Endothelial cell of umbilical vein (primary cell): ENCODE measurements at regions of chr12 and their contacts with region 1.

Region 1: DNA sequence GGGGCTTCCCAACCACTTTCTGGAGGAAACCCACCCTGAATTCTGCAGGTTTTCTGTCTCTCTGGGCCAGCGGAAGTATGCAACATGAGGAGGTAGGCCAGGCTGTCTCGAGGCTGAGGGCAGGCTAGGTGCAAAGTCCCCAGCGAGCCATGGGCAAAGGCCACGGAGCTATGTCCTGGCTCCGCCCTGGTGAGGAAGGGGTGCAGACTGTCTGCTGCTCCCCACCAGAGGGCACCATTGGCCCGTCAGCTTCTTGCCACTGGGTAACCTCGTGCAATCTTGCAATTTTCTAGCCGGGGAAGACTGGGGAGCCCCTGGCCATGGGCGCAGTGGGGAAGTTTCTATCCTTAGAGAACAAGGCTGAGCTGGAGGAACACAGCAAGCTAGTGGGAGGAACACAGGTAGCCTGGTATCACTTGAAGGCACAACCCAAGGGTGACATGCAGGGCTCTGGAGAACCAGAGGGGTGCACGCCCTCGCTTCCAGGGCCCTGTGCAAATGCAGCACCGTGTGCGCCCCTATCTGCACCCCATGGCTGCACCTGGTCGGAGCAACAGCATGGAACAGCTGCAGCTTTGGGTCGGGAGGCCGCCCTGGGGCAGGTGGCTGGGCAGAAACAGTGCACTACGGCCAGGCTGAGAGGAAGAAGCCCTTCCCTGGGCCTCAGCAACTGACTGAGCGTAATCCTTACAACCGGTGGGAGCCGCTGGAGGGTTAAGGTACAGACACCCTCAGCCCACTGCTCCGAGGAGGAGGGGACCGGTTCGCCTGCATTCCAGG is 27.6 kb upstream of the RPLP0 start:
- DNase-seq: peak; percentile 80
- H3K4me3 ChIP-seq: no peak overlapping the region
- H3K27ac ChIP-seq: peak overlapping the region; percentile 100
- H3K4me1 ChIP-seq: peaks cover 72% of the 10 kb centered on the region
- H3K27me3 ChIP-seq: no peaks in the 10 kb centered on the region
- CTCF ChIP-seq: peak; percentile 90 to 94
- POLR2A ChIP-seq: no peak

Region 2: DNA sequence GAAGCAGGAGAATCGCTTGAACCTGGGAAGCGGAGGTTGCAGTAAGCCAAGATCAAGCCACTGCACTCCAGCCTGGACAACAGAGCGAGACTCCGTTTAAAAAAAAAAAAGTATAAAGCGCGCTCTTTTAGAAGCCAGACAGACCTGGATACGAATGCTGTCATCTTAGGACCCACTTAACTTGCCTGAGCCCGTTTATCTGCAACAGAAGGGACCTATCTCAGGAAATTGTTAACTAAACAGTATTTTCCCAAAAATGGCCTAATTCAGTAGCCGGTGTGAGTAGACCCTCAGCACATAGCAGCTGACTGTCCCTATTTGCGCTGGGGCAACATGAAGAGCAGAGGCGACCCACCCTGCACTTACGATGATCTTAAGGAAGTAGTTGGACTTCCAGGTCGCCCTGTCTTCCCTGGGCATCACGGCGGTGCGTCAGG is 28.1 kb before region 1 on chr12:
- CTCF ChIA-PET with region 1: interaction called, 32 read pairs
- POLR2A ChIA-PET with region 1: interaction called, 46 read pairs
- dilution Hi-C with region 1: no loop called
- intact Hi-C with region 1: loop called (anchors 1 kb)
- DNase-seq: peak; percentile 27
- H3K4me3 ChIP-seq: peak overlapping the region; percentile 31 to 84 (median 78)
- H3K27ac ChIP-seq: peak overlapping the region; percentile 34
- H3K4me1 ChIP-seq: peaks cover 42% of the 10 kb centered on the region
- H3K27me3 ChIP-seq: no peaks in the 10 kb centered on the region
- CTCF ChIP-seq: no peak
- POLR2A ChIP-seq: no peak

Region 3: GRCh38 chr12:120242275-120242799 is 13.9 kb after region 1 on chr12:
- CTCF ChIA-PET with region 1: interaction called, 1,402 read pairs
- POLR2A ChIA-PET with region 1: interaction called, 36 read pairs
- dilution Hi-C with region 1: no loop called
- intact Hi-C with region 1: loop called (anchors 1 kb)
- DNase-seq: peak; percentile 96
- H3K4me3 ChIP-seq: no peak overlapping the region
- H3K27ac ChIP-seq: peak overlapping the region; percentile 83
- H3K4me1 ChIP-seq: peaks cover 82% of the 10 kb centered on the region
- H3K27me3 ChIP-seq: no peaks in the 10 kb centered on the region
- CTCF ChIP-seq: no peak
- POLR2A ChIP-seq: peak; percentile 91

Region 4: GRCh38 chr12:120265473-120266179 is 37.1 kb after region 1 on chr12 and contains the start of gene PXN:
- CTCF ChIA-PET with region 1: interaction called, 1,402 read pairs
- POLR2A ChIA-PET with region 1: interaction called, 88 read pairs
- dilution Hi-C with region 1: no loop called
- intact Hi-C with region 1: loop called (anchors 1 kb)
- DNase-seq: peak; percentile 74
- H3K4me3 ChIP-seq: peak within 1 kb of the TSS; percentile 60 to 91 (median 65)
- H3K27ac ChIP-seq: peak within 1 kb of the TSS; percentile 58
- H3K4me1 ChIP-seq: peaks cover 45% of the 10 kb centered on the region
- H3K27me3 ChIP-seq: no peaks in the 10 kb centered on the region
- CTCF ChIP-seq: peak; percentile 70 to 79
- POLR2A ChIP-seq: peak; percentile 55
- total RNA-seq, gene PXN: 228 and 258 TPM in 2 replicates

Region 5: DNA sequence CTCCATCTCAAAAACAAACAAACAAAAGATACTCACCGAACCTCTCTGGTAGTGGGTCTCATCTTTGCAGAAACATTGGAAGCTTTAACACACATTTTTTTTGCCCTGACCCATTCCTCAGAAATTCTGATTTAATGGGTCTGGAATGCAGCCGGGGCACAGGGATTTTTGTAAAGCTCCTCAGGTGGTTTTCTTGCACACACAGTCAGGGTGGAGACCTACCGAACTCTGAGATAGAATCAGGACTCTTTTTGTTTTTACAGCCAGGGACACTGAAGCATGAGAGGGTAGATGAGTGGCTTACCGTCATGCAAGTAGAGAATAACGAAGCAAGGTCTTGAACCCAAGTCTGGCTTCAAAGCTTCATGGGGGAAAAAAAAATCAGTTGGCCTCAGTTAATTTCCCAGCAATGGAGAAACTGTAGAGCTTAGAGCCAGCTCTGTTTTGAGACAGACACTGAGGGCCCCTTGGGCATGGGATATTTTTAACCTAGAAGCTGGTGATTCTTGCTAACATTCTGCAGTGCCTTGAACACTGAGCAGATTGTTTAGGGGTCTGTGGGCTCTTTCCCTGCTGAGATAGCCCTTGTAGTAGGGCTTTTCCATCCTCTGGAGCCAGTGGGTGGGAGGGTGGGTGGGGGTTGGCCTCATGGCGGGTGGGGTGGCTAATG is 58.5 kb after region 1 on chr12:
- CTCF ChIA-PET with region 1: interaction called, 99 read pairs
- POLR2A ChIA-PET with region 1: interaction called, 211 read pairs
- dilution Hi-C with region 1: no loop called
- intact Hi-C with region 1: loop called (anchors 1 kb)
- DNase-seq: no peak
- H3K4me3 ChIP-seq: no peak overlapping the region
- H3K27ac ChIP-seq: no peak overlapping the region
- H3K4me1 ChIP-seq: peaks cover 4% of the 10 kb centered on the region
- H3K27me3 ChIP-seq: no peaks in the 10 kb centered on the region
- CTCF ChIP-seq: no peak
- POLR2A ChIP-seq: no peak

Region 6: GRCh38 chr12:120327593-120327992 is 99.1 kb after region 1 on chr12 and contains the start of gene PLA2G1B:
- CTCF ChIA-PET with region 1: interaction called, 10 read pairs
- POLR2A ChIA-PET with region 1: no interaction called
- dilution Hi-C with region 1: no loop called
- intact Hi-C with region 1: no loop called
- DNase-seq: no peak
- H3K4me3 ChIP-seq: no peak within 1 kb of the TSS
- H3K27ac ChIP-seq: no peak within 1 kb of the TSS
- H3K4me1 ChIP-seq: no peaks in the 10 kb centered on the region
- H3K27me3 ChIP-seq: no peaks in the 10 kb centered on the region
- CTCF ChIP-seq: no peak
- POLR2A ChIP-seq: no peak
- total RNA-seq, gene PLA2G1B: not detected in 2 replicates

Region 7: GRCh38 chr12:120376416-120376815 is 147.9 kb after region 1 on chr12:
- CTCF ChIA-PET with region 1: no interaction called
- POLR2A ChIA-PET with region 1: no interaction called
- dilution Hi-C with region 1: no loop called
- intact Hi-C with region 1: no loop called
- DNase-seq: no peak
- H3K4me3 ChIP-seq: no peak overlapping the region
- H3K27ac ChIP-seq: no peak overlapping the region
- H3K4me1 ChIP-seq: no peaks in the 10 kb centered on the region
- H3K27me3 ChIP-seq: peaks cover 26 to 31% of the 10 kb centered on the region in 2 experiments
- CTCF ChIP-seq: no peak
- POLR2A ChIP-seq: no peak

Region 8: DNA sequence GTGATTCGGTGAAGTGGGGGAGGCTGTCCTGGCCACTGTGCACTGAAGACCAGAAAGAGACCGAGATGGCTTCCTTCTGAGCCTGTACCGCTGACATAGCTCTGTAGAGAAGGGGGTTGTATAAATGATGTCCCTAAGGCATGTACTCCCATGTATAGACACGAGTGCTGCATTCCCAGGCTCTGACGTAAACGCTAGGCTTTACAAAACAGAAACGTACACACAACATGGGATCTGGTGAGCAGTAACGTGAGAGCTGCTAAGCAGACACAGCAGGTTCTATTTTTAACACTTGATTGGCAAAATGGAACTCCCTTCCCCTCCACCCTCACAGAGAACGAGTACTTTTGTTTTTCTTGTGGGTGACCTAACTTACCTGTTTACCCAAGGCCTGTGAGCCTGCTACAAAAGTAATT is 533.0 kb after region 1 on chr12:
- CTCF ChIA-PET with region 1: no interaction called
- POLR2A ChIA-PET with region 1: no interaction called
- dilution Hi-C with region 1: no loop called
- intact Hi-C with region 1: no loop called
- DNase-seq: no peak
- H3K4me3 ChIP-seq: no peak overlapping the region
- H3K27ac ChIP-seq: no peak overlapping the region
- H3K4me1 ChIP-seq: no peaks in the 10 kb centered on the region
- H3K27me3 ChIP-seq: no peaks in the 10 kb centered on the region
- CTCF ChIP-seq: no peak
- POLR2A ChIP-seq: no peak